ENCODE measurements at regions of chr4 and their contacts with region 1.

Region 1: GRCh38 chr4:145180298-145181090 is at the start of gene OTUD4:
- DNase-seq: peak; percentile 91
- ATAC-seq: peak; percentile 81
- H3K4me3 Mint-ChIP-seq: peak within 1 kb of the TSS; percentile 89
- H3K27ac Mint-ChIP-seq: peak within 1 kb of the TSS; percentile 93
- H3K4me1 Mint-ChIP-seq: peaks cover 30% of the 10 kb centered on the region
- H3K27me3 Mint-ChIP-seq: no peaks in the 10 kb centered on the region
- CTCF ChIP-seq: no peak
- total RNA-seq, gene OTUD4: 45.2 and 47.3 TPM in 2 replicates

Region 2: GRCh38 chr4:143184217-143185116 is 1996.0 kb before region 1 on chr4 and contains the start of gene USP38:
- CTCF ChIA-PET with region 1: no interaction called
- POLR2A ChIA-PET with region 1: no interaction called
- intact Hi-C with region 1: loop called (anchors 5 kb)
- DNase-seq: peak; percentile 73
- ATAC-seq: peak; percentile 87
- H3K4me3 Mint-ChIP-seq: peak within 1 kb of the TSS; percentile 93
- H3K27ac Mint-ChIP-seq: peak within 1 kb of the TSS; percentile 94
- H3K4me1 Mint-ChIP-seq: peaks cover 56% of the 10 kb centered on the region
- H3K27me3 Mint-ChIP-seq: no peaks in the 10 kb centered on the region
- CTCF ChIP-seq: no peak
- total RNA-seq, gene USP38: 20.9 and 24.9 TPM in 2 replicates

Region 3: GRCh38 chr4:144658903-144659302 is 521.6 kb before region 1 on chr4:
- CTCF ChIA-PET with region 1: no interaction called
- POLR2A ChIA-PET with region 1: no interaction called
- intact Hi-C with region 1: no loop called
- DNase-seq: no peak
- ATAC-seq: no peak
- H3K4me3 Mint-ChIP-seq: no peak overlapping the region
- H3K27ac Mint-ChIP-seq: no peak overlapping the region
- H3K4me1 Mint-ChIP-seq: no peaks in the 10 kb centered on the region
- H3K27me3 Mint-ChIP-seq: no peaks in the 10 kb centered on the region
- CTCF ChIP-seq: no peak

Region 4: DNA sequence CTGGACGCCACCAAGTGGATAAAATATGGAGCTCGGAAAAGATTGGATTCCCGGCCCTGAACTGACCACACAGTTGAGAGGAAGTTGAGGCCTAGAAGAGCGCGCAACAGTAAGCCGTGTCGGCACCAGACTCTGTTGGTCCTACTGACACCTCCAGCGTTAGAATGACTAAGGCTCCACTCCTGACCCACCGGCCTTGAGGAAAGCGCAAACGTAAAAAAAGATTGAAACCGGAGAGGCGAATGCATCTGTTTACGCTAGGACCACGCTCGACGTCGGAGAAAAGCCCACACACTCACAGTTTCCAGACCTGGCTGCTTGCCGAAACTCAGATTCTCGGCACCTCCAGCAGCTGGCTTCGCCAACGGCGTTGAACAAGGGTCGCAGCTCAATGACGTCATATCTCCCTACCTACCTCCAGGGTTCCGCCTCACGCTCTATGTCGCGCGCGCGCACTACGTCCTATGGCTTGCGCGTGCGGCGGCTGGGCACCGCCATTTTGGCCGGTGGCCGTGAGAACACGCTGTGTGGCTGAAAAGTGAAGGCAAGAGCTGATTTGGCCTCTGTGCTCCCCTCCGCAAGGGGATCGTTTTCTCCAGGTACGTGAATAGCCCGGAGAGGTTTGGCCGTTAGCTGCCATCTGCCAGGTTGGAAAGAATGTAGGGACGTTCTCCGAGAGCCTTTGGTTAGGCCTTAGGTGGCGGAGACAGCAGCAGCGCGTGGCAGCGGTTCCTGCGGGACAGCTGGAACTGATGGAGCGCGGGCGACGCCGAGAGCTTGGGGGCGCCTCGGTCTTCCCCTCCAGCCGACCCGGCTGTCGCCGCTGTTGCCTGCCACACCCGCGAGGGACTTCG is 82.4 kb before region 1 on chr4 and contains the starts of genes ABCE1 and ANAPC10:
- CTCF ChIA-PET with region 1: no interaction called
- POLR2A ChIA-PET with region 1: interaction called, 37 read pairs
- intact Hi-C with region 1: loop called (anchors 1 kb)
- DNase-seq: peak; percentile 87
- ATAC-seq: peak; percentile 89
- H3K4me3 Mint-ChIP-seq: peak within 1 kb of the TSS; percentile 94
- H3K27ac Mint-ChIP-seq: peak within 1 kb of the TSS; percentile 96
- H3K4me1 Mint-ChIP-seq: peaks cover 51% of the 10 kb centered on the region
- H3K27me3 Mint-ChIP-seq: no peaks in the 10 kb centered on the region
- CTCF ChIP-seq: no peak
- total RNA-seq, gene ABCE1: 75.5 and 81.6 TPM in 2 replicates
- total RNA-seq, gene ANAPC10: 18.2 and 21.8 TPM in 2 replicates

Region 5: GRCh38 chr4:145168581-145169187 is 11.8 kb before region 1 on chr4:
- CTCF ChIA-PET with region 1: no interaction called
- POLR2A ChIA-PET with region 1: interaction called, 8 read pairs
- intact Hi-C with region 1: loop called (anchors 1 kb)
- DNase-seq: no peak
- ATAC-seq: no peak
- H3K4me3 Mint-ChIP-seq: no peak overlapping the region
- H3K27ac Mint-ChIP-seq: peak overlapping the region; percentile 2
- H3K4me1 Mint-ChIP-seq: peaks cover 20% of the 10 kb centered on the region
- H3K27me3 Mint-ChIP-seq: no peaks in the 10 kb centered on the region
- CTCF ChIP-seq: no peak

Region 6: GRCh38 chr4:145481164-145481941 is 300.9 kb after region 1 on chr4 and contains the start of gene SMAD1:
- CTCF ChIA-PET with region 1: no interaction called
- POLR2A ChIA-PET with region 1: no interaction called
- intact Hi-C with region 1: loop called (anchors 5 kb)
- DNase-seq: peak; percentile 17
- ATAC-seq: peak; percentile 49
- H3K4me3 Mint-ChIP-seq: peak within 1 kb of the TSS; percentile 72
- H3K27ac Mint-ChIP-seq: no peak within 1 kb of the TSS
- H3K4me1 Mint-ChIP-seq: peaks cover 11% of the 10 kb centered on the region
- H3K27me3 Mint-ChIP-seq: peaks cover 40% of the 10 kb centered on the region
- CTCF ChIP-seq: no peak
- total RNA-seq, gene SMAD1: not detected in 2 replicates

Region 7: GRCh38 chr4:146059865-146060264 is 879.4 kb after region 1 on chr4:
- CTCF ChIA-PET with region 1: no interaction called
- POLR2A ChIA-PET with region 1: no interaction called
- intact Hi-C with region 1: loop called (anchors 2 kb)
- DNase-seq: peak; percentile 45
- ATAC-seq: peak; percentile 91
- H3K4me3 Mint-ChIP-seq: no peak overlapping the region
- H3K27ac Mint-ChIP-seq: no peak overlapping the region
- H3K4me1 Mint-ChIP-seq: peaks cover 39% of the 10 kb centered on the region
- H3K27me3 Mint-ChIP-seq: no peaks in the 10 kb centered on the region
- CTCF ChIP-seq: no peak

Measured in activated B cell treated with CpG ODN at 0.5 μM for 24 hours (primary cell).